ENCODE measurements at regions of chr19 and their contacts with region 1.

Region 1: DNA sequence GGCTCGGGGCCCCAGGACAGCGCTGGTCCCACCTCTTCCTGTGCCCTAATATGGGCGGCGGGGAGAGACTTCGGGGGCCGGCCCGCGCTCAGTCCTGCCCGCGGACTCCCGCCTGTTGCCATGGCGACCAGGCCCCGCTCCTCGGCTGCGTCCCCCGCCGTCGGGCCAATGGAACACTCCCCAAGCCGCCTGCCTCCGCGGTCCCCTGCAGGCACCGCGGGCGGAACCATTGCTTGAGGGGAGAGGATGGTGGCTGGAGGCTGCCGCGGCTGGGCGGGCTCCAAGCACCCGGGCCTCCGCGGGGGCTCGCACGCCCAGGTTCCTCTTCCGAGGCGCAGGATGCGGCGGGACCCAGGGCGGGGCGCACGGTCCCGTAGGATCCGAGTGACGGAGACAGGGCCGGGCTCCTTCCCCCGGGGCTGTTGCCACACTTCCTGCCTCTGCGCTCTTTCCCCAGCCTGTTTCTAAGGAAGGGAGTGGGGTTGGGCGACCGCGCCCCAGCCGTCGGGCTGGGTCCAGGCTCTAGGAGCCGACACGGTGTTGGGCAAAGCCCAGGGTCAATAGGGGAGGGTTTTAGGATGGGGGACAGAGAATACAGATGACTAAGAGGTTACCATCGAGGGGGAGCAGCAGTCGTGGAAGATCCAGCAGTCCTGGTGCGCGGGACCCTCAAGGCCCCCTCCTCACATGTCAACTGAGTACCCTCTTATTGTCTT is 1.2 kb upstream of the JUNB start:
- DNase-seq: peak; percentile 88 to 97 (median 92)
- ATAC-seq: peak; percentile 70
- H3K4me3 ChIP-seq: peak overlapping the region; percentile 83
- H3K27ac ChIP-seq: peak overlapping the region; percentile 89
- H3K4me1 ChIP-seq: peaks cover 46 to 82% of the 10 kb centered on the region in 2 experiments
- H3K27me3 ChIP-seq: no peaks in the 10 kb centered on the region
- CTCF ChIP-seq: no peak
- EP300 ChIP-seq: no peak; the same call in 1 of the 2 replicates
- POLR2A ChIP-seq: 0 out of 2 replicates have a peak, but pooled peaks have one; percentile 17
- RAD21 ChIP-seq: no peak

Region 2: GRCh38 chr19:12681074-12681951 is 108.7 kb before region 1 on chr19 and contains the start of gene DHPS:
- CTCF ChIA-PET with region 1: no interaction called
- POLR2A ChIA-PET with region 1: interaction called, 15 read pairs
- in situ Hi-C with region 1: no loop called
- intact Hi-C with region 1: no loop called
- DNase-seq: peak; percentile 85 to 99 (median 90)
- ATAC-seq: peak; percentile 90
- H3K4me3 ChIP-seq: peak within 1 kb of the TSS; percentile 68
- H3K27ac ChIP-seq: peak within 1 kb of the TSS; percentile 98
- H3K4me1 ChIP-seq: peaks cover 0 to 19% of the 10 kb centered on the region in 2 experiments; a peak in 3 of 5 replicates
- H3K27me3 ChIP-seq: no peaks in the 10 kb centered on the region
- CTCF ChIP-seq: peak in 1 of 3 experiments; percentile 22; a peak in 2 of 6 replicates
- EP300 ChIP-seq: no peak; the same call in 1 of the 2 replicates
- POLR2A ChIP-seq: peak; percentile 94
- RAD21 ChIP-seq: no peak
- polyA plus RNA-seq, gene DHPS: 47.1 to 54.1 TPM

Region 3: DNA sequence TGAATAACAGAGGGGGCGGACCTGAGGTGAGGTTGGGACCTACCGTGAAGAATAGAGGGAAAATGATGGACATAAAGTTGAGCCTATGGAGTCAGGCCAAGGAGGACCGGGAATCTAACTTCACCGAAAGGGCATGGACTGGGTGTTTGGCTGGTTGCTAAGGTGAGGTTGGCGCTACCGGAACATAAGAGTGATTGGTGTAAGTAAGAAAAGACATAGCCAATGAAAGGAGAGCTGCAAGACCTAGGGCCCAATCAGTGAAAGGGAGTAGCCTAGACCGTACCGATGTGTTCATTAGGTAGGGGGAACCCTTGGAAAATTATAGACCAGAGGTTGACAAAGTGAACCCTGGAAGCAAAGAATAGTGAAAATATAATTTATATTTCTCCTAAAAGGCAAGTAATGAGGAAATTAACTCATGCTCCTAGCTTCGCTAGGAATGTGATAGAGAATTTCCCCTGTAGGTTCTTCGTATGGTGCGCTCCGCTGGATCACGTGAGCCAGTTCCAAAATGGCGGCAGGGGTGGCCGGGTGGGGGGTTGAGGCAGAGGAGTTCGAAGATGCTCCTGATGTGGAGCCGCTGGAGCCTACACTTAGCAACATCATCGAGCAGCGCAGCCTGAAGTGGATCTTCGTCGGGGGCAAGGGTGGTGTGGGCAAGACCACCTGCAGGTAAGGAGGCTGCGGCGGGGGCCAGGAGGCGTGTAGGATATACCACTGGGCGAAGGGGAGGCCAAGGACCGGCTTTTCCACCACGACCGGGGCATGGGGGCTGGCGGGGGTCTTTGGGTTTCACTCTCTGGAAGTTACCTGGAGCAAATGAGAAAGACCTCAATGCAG is 52.8 kb before region 1 on chr19 and contains the start of gene GET3:
- CTCF ChIA-PET with region 1: no interaction called
- POLR2A ChIA-PET with region 1: interaction called, 11 read pairs
- in situ Hi-C with region 1: no loop called
- intact Hi-C with region 1: no loop called
- DNase-seq: peak; percentile 86 to 98 (median 92)
- ATAC-seq: peak; percentile 92
- H3K4me3 ChIP-seq: peak within 1 kb of the TSS; percentile 63
- H3K27ac ChIP-seq: peak within 1 kb of the TSS; percentile 97
- H3K4me1 ChIP-seq: peaks cover 11 to 25% of the 10 kb centered on the region in 2 experiments
- H3K27me3 ChIP-seq: no peaks in the 10 kb centered on the region
- CTCF ChIP-seq: no peak
- EP300 ChIP-seq: no peak; the same call in 1 of the 2 replicates
- POLR2A ChIP-seq: peak; percentile 85
- RAD21 ChIP-seq: no peak
- polyA plus RNA-seq, gene GET3: 8.3 to 29.1 TPM

Region 4: GRCh38 chr19:12766051-12766521 is 24.0 kb before region 1 on chr19:
- CTCF ChIA-PET with region 1: no interaction called
- POLR2A ChIA-PET with region 1: interaction called, 27 read pairs
- in situ Hi-C with region 1: no loop called
- intact Hi-C with region 1: no loop called
- DNase-seq: peak; percentile 44 to 72 (median 54)
- ATAC-seq: peak; percentile 95
- H3K4me3 ChIP-seq: peak overlapping the region; percentile 41
- H3K27ac ChIP-seq: no peak overlapping the region
- H3K4me1 ChIP-seq: peaks cover 0 to 29% of the 10 kb centered on the region in 2 experiments; a peak in 2 of 5 replicates
- H3K27me3 ChIP-seq: no peaks in the 10 kb centered on the region
- CTCF ChIP-seq: peak; percentile 51 to 92 (median 58); a peak in 5 of 6 replicates
- EP300 ChIP-seq: no peak
- POLR2A ChIP-seq: no peak
- RAD21 ChIP-seq: peak; percentile 18 to 60; a peak in 2 of 4 replicates

Region 5: DNA sequence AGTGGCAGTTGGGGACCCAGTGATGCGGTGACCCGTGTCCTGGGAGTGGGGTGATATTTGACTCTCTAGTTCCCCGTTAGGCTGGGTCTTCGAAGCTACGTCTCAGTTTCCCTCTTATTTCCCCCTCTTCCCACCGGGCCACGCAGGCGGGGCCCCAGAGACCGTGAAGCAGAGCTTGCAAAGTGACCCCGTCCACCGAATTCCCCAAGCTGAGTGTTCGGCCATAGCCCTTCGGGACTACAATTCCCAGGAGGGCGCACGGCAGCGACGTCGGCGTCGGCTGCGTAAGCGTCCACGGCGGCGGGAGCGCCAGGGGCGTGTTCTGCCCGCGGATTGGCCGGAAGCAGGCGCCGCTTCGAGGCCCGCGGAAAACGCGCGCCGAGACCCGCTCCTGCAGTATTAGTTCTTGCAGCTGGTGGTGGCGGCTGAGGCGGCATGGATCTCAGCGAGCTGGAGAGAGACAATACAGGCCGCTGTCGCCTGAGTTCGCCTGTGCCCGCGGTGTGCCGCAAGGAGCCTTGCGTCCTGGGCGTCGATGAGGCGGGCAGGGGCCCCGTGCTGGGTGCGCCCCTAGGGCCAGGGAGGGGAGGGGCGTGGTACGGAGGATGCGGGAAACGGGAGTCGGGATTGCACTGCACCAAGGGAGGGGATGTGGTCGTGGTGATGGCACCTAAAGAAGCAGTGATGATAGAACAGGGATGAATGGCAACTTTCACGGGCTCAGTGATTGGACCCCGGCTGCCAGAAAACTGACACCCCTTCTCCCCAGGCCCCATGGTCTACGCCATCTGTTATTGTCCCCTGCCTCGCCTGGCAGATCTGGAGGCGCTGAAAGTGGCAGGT is 16.4 kb after region 1 on chr19 and contains the start of gene RNASEH2A:
- CTCF ChIA-PET with region 1: interaction called, 4 read pairs
- POLR2A ChIA-PET with region 1: interaction called, 29 read pairs
- in situ Hi-C with region 1: no loop called
- intact Hi-C with region 1: no loop called
- DNase-seq: peak; percentile 88 to 95 (median 90)
- ATAC-seq: peak; percentile 95
- H3K4me3 ChIP-seq: peak within 1 kb of the TSS; percentile 80
- H3K27ac ChIP-seq: peak within 1 kb of the TSS; percentile 93
- H3K4me1 ChIP-seq: peaks cover 14 to 45% of the 10 kb centered on the region in 2 experiments; a peak in 4 of 5 replicates
- H3K27me3 ChIP-seq: no peaks in the 10 kb centered on the region
- CTCF ChIP-seq: 0 out of 6 replicates have a peak, but pooled peaks of 1 of the 3 experiments have one; percentile 15
- EP300 ChIP-seq: no peak
- POLR2A ChIP-seq: peak; percentile 86
- RAD21 ChIP-seq: no peak
- polyA plus RNA-seq, gene RNASEH2A: 22.3 to 34.6 TPM

Region 6: GRCh38 chr19:13002166-13002898 is 212.3 kb after region 1 on chr19:
- CTCF ChIA-PET with region 1: no interaction called
- POLR2A ChIA-PET with region 1: no interaction called
- in situ Hi-C with region 1: no loop called
- intact Hi-C with region 1: no loop called
- DNase-seq: no peak
- ATAC-seq: no peak
- H3K4me3 ChIP-seq: no peak overlapping the region
- H3K27ac ChIP-seq: no peak overlapping the region
- H3K4me1 ChIP-seq: peaks cover 0 to 44% of the 10 kb centered on the region in 2 experiments; a peak in 2 of 5 replicates
- H3K27me3 ChIP-seq: no peaks in the 10 kb centered on the region
- CTCF ChIP-seq: no peak
- EP300 ChIP-seq: no peak
- POLR2A ChIP-seq: no peak
- RAD21 ChIP-seq: no peak